ENCODE measurements at regions of chr12 and their contacts with region 1.

Region 1: DNA sequence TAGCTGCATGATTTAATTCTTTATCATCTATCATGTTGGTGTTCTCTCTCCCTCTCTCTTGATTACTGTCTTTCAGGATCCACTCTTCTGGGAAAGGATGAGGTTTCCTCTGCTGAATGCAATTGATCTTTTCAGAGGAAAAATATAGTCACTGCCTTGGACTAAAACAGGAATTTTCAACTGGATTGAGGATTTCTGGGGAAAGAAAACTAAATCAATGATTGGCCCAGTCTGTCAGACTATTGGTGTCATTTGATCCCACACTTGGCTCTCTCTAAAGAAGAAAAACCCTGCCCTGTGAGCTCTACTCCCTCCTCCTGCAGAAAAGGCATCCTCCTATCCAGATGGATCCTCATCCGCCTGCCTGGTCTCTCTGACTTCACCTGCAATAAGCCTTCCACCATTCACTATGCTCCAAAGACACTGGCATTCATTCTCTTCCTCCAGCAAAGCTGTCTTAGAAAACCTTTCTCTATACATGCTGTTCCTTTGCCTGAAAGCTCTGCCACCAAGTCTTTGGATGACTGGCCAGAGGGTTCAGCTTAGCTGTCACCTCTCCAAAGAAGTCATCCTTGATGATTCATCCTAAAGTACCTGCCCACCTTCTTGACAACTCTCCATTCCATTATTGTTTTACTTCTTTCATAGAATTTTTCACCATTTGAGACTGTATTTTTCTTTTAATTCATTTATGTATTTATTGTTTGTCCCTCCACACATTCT is 127.7 kb upstream of the CAND1 start:
- DNase-seq: peak; percentile 49
- ATAC-seq: peak; percentile 99
- H3K4me3 Mint-ChIP-seq: no peak overlapping the region
- H3K27ac Mint-ChIP-seq: no peak overlapping the region
- H3K4me1 Mint-ChIP-seq: peaks cover 7% of the 10 kb centered on the region
- H3K27me3 Mint-ChIP-seq: peaks cover 12% of the 10 kb centered on the region

Region 2: GRCh38 chr12:67025543-67026114 is 115.8 kb before region 1 on chr12:
- CTCF ChIA-PET with region 1: interaction called, 4 read pairs
- POLR2A ChIA-PET with region 1: no interaction called
- intact Hi-C with region 1: loop called in 1 of 2 experiments (anchors 5 kb)
- DNase-seq: peak; percentile 65
- ATAC-seq: peak; percentile 49
- H3K4me3 Mint-ChIP-seq: no peak overlapping the region
- H3K27ac Mint-ChIP-seq: no peak overlapping the region
- H3K4me1 Mint-ChIP-seq: no peaks in the 10 kb centered on the region
- H3K27me3 Mint-ChIP-seq: peaks cover 4% of the 10 kb centered on the region